ENCODE measurements at regions of chr13 and their contacts with region 1.

Region 1: GRCh38 chr13:107211073-107211472 is 643.1 kb upstream of the ARGLU1 start:
- DNase-seq: peak in 2 of 3 donors; percentile 78 to 89
- ATAC-seq: peak; percentile 97
- H3K4me3 ChIP-seq: no peak overlapping the region
- H3K4me1 ChIP-seq: peaks cover 9% of the 10 kb centered on the region
- CTCF ChIP-seq: peak; percentile 69

Region 2: GRCh38 chr13:107413005-107413404 is 201.9 kb after region 1 on chr13:
- intact Hi-C with region 1: loop called in 1 of 2 experiments (anchors 10 kb)
- DNase-seq: no peak
- ATAC-seq: no peak
- H3K4me3 ChIP-seq: no peak overlapping the region
- H3K4me1 ChIP-seq: no peaks in the 10 kb centered on the region
- CTCF ChIP-seq: no peak

Region 3: DNA sequence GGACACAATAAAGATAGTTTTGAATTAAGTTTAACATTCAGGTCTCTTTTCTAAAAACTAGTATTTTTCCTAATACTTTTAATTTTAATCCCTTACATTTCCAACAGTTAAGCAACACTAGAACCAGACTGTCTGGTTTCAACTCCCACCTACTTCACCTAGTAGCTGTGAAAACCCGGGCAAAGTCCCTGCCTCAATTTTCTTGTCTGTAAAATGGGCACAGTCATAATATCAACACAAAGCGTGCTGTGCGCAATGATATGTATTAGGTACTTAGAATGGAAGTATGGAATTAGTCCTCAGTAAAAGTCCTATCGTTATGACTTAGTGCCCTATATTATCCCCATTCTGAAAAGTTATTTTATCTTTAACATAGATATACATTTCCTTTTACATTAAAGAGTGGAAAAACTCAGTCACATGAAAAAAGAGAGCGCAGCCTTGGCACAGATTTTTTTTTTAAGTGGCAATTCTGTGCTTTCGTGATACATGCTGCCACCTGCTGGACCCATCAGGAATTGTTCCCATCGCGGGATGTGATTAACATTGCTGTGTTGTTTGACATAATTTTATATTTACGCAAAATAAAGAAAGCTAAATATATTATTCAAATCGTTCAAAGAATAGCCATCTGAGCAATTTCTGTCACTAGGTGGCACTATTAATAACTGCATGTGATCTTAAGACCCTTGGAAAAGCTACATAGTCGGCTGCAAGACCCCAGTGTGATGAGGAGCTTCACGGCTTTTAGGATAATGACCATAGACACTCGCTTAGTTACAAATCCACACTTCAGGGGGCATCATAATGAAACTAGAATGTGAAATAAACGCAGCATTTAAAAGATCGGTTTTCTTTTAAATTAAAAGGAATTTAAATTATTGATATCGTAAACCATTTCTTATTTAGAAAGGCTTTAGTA is 944.4 kb after region 1 on chr13:
- intact Hi-C with region 1: loop called in 1 of 2 experiments (anchors 10 kb)
- DNase-seq: peak in 2 of 3 donors; percentile 78 to 86
- ATAC-seq: peak; percentile 72
- H3K4me3 ChIP-seq: no peak overlapping the region
- H3K4me1 ChIP-seq: peaks cover 15% of the 10 kb centered on the region
- CTCF ChIP-seq: peak; percentile 71

Measured in mucosa of descending colon (tissue), 3 donors.